Left cardiac atrium (tissue), 4 donors: ENCODE measurements at regions of chr6 and their contacts with region 1.

Region 1: GRCh38 chr6:158853072-158853871 is 34.1 kb upstream of the EZR start:
- DNase-seq: peak; percentile 80
- ATAC-seq: peak; percentile 76 to 88

Region 2: DNA sequence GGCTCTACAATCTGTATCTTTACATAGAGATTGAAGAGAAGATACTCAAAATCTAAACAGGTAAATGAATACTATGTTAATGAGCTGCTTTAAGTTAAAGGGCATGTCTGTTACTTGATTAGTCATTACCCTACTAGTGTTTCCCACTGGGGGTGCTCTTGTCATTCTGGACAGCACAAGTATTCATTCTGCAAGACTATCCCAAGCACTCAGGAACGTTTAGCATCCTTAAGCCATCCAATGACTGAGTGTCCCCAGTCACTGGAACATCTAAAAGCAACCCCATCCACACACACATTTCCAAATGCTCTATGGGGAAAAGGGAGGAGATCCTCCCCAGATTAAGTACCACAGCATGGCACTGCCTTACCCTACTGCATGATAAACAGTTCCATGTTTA is 59.8 kb before region 1 on chr6:
- intact Hi-C with region 1: loop called in 1 of 2 experiments (anchors 10 kb)
- DNase-seq: no peak
- ATAC-seq: peak in 1 of 2 donors; percentile 23